Panc1 (cell line): ENCODE measurements at regions of chr15 and their contacts with region 1.

Region 1: GRCh38 chr15:69475769-69476358 is 23.2 kb downstream of the RPLP1 start:
- DNase-seq: peak; percentile 64
- ATAC-seq: peak; percentile 92
- H3K4me3 ChIP-seq: no peak overlapping the region
- H3K27ac ChIP-seq: no peak overlapping the region
- H3K4me1 ChIP-seq: no peaks in the 10 kb centered on the region
- H3K27me3 ChIP-seq: no peaks in the 10 kb centered on the region
- CTCF ChIP-seq: peak; percentile 97

Region 2: DNA sequence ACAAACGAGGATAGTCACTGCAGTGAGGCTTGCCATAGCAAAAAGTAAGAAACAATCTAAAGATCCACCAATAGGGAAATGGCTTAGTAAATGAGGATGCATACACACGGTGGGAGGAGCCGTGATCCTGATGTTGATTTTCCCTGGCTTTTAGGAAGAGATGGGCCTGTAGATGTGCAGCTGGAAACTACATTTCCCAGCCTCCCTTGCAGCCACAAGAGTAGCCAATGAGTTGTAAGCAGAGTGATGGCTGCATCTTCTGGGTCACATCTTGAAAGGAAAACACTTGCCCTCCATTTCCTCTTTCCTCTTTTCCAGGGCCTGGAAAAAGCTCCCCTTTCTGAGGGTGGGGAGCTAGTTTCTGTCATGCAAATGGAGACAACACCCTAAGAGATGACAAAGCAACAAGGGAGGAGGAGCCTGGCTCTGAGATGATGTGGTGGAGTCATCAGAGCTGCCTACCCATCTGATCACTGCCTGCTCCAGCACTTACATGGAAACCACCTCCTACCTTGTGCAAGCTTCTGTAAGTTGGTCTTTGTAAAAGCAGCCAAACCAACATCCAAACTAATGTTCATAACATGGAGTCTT is 482.7 kb after region 1 on chr15:
- CTCF ChIA-PET with region 1: interaction called, 10 read pairs
- POLR2A ChIA-PET with region 1: no interaction called
- in situ Hi-C with region 1: no loop called
- intact Hi-C with region 1: no loop called
- DNase-seq: no peak
- ATAC-seq: no peak
- H3K4me3 ChIP-seq: no peak overlapping the region
- H3K27ac ChIP-seq: no peak overlapping the region
- H3K4me1 ChIP-seq: no peaks in the 10 kb centered on the region
- H3K27me3 ChIP-seq: no peaks in the 10 kb centered on the region
- CTCF ChIP-seq: no peak

Region 3: GRCh38 chr15:70091726-70092463 is 616.0 kb after region 1 on chr15:
- CTCF ChIA-PET with region 1: no interaction called
- POLR2A ChIA-PET with region 1: no interaction called
- in situ Hi-C with region 1: no loop called
- intact Hi-C with region 1: loop called (anchors 5 kb)
- DNase-seq: no peak
- ATAC-seq: peak; percentile 68
- H3K4me3 ChIP-seq: peak overlapping the region; percentile 11 to 36; a peak in 3 of 4 replicates
- H3K27ac ChIP-seq: peak overlapping the region; percentile 85
- H3K4me1 ChIP-seq: peaks cover 61% of the 10 kb centered on the region
- H3K27me3 ChIP-seq: no peaks in the 10 kb centered on the region
- CTCF ChIP-seq: no peak

Region 4: DNA sequence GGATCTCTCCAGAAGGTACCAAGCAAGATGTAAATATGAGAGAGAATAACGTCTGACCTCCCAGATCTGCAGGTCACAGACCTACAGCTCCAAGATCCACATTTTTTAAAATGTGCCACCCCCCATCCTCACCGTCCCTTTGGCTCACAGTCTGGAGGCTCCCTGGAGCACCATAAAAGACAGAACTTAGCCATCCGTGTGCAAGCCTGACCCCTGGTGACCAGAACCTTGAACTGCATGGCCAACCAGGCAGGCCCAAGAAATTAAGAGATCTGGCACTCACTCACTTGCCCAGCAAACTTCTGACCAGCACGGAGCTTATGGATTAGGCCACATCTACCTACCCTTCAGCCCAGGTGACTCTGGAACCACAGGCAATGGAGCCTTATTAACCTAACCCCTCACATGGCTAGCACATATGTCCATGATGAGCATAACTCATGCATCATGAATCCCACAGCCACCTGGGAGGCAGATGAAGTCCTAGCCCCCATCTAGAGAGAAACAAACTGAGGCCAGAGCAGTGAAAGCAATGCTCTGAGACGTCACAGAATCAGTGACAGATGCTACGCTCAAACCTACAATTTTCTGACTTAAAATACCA is 1012.2 kb after region 1 on chr15:
- CTCF ChIA-PET with region 1: no interaction called
- POLR2A ChIA-PET with region 1: no interaction called
- in situ Hi-C with region 1: no loop called
- intact Hi-C with region 1: loop called (anchors 5 kb)
- DNase-seq: no peak
- ATAC-seq: peak; percentile 28
- H3K4me3 ChIP-seq: no peak overlapping the region
- H3K27ac ChIP-seq: peak overlapping the region; percentile 92
- H3K4me1 ChIP-seq: peaks cover 40% of the 10 kb centered on the region
- H3K27me3 ChIP-seq: no peaks in the 10 kb centered on the region
- CTCF ChIP-seq: peak; percentile 95

Region 5: GRCh38 chr15:70799667-70800450 is 1324.0 kb after region 1 on chr15:
- CTCF ChIA-PET with region 1: interaction called, 12 read pairs
- POLR2A ChIA-PET with region 1: no interaction called
- in situ Hi-C with region 1: no loop called
- intact Hi-C with region 1: no loop called
- DNase-seq: no peak
- ATAC-seq: peak; percentile 71
- H3K4me3 ChIP-seq: no peak overlapping the region
- H3K27ac ChIP-seq: peak overlapping the region; percentile 100
- H3K4me1 ChIP-seq: peaks cover 49% of the 10 kb centered on the region
- H3K27me3 ChIP-seq: no peaks in the 10 kb centered on the region
- CTCF ChIP-seq: no peak